ENCODE measurements at regions of chr1 and their contacts with region 1.

Region 1: GRCh38 chr1:203006948-203007871 is at the start of gene TMEM183A:
- DNase-seq: peak; percentile 97
- H3K4me3 Mint-ChIP-seq: peak within 1 kb of the TSS; percentile 80
- H3K27ac Mint-ChIP-seq: peak within 1 kb of the TSS; percentile 96
- H3K4me1 Mint-ChIP-seq: peaks cover 24% of the 10 kb centered on the region
- H3K27me3 Mint-ChIP-seq: no peaks in the 10 kb centered on the region
- total RNA-seq, gene TMEM183A: 68.1 to 76.5 TPM

Region 2: DNA sequence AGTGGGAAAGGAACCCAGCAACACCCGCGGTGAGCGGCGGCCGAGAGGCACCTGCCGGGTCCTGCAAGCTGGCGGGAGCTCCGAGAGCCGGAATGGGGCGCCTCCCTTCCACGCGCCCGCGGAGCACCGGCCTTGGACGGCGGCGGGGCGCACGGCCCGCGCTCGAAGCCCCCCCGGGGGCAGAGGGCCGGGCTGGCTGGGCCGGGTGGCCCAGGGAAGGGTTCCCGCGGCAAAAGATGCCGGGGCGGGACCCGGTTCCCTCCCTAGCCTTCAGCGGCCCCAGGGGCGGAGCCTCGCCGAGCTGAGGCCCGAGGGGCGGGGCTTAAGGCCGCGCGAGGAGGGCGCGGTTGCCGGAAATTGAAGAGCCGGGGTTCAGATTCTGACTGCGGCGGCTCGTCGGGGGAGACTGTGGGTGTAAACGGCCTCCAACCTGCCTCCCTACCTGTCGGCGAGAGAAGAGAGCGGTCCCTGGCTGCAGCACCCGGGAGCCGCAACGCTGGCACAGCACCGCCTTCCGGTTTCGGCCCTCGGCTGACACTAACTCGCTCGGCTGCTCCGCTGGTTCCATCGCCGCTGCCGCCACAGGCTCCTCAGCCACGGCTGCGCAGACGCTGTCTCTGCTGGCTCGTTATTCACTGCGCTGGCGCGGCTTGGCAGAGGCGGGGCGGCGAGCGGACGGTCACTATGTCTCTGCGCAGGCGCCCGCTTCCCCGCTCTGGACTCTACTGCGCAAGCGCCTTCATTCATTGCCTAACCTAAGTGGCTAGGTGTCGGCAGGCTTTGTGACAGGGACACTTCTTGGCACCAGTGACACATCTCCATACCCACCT is 118.5 kb before region 1 on chr1 and contains the start of gene RABIF:
- CTCF ChIA-PET with region 1: no interaction called
- POLR2A ChIA-PET with region 1: interaction called, 5 read pairs
- intact Hi-C with region 1: loop called (anchors 1 kb)
- DNase-seq: peak; percentile 98
- H3K4me3 Mint-ChIP-seq: peak within 1 kb of the TSS; percentile 93
- H3K27ac Mint-ChIP-seq: peak within 1 kb of the TSS; percentile 98
- H3K4me1 Mint-ChIP-seq: peaks cover 22% of the 10 kb centered on the region
- H3K27me3 Mint-ChIP-seq: no peaks in the 10 kb centered on the region
- total RNA-seq, gene RABIF: 9.6 to 10.1 TPM

Region 3: GRCh38 chr1:203026031-203026989 is 19.1 kb after region 1 on chr1 and contains the start of gene PPFIA4:
- CTCF ChIA-PET with region 1: interaction called, 5 read pairs
- POLR2A ChIA-PET with region 1: interaction called, 12 read pairs
- intact Hi-C with region 1: loop called (anchors 1 kb)
- DNase-seq: peak; percentile 92
- H3K4me3 Mint-ChIP-seq: peak within 1 kb of the TSS; percentile 66
- H3K27ac Mint-ChIP-seq: peak within 1 kb of the TSS; percentile 9
- H3K4me1 Mint-ChIP-seq: peaks cover 13% of the 10 kb centered on the region
- H3K27me3 Mint-ChIP-seq: peaks cover 5% of the 10 kb centered on the region
- total RNA-seq, gene PPFIA4: 16.7 to 21.4 TPM

Region 4: GRCh38 chr1:203549309-203549708 is 542.1 kb after region 1 on chr1:
- CTCF ChIA-PET with region 1: no interaction called
- POLR2A ChIA-PET with region 1: no interaction called
- intact Hi-C with region 1: no loop called
- DNase-seq: no peak
- H3K4me3 Mint-ChIP-seq: no peak overlapping the region
- H3K27ac Mint-ChIP-seq: no peak overlapping the region
- H3K4me1 Mint-ChIP-seq: no peaks in the 10 kb centered on the region
- H3K27me3 Mint-ChIP-seq: peaks cover 2% of the 10 kb centered on the region

Region 5: DNA sequence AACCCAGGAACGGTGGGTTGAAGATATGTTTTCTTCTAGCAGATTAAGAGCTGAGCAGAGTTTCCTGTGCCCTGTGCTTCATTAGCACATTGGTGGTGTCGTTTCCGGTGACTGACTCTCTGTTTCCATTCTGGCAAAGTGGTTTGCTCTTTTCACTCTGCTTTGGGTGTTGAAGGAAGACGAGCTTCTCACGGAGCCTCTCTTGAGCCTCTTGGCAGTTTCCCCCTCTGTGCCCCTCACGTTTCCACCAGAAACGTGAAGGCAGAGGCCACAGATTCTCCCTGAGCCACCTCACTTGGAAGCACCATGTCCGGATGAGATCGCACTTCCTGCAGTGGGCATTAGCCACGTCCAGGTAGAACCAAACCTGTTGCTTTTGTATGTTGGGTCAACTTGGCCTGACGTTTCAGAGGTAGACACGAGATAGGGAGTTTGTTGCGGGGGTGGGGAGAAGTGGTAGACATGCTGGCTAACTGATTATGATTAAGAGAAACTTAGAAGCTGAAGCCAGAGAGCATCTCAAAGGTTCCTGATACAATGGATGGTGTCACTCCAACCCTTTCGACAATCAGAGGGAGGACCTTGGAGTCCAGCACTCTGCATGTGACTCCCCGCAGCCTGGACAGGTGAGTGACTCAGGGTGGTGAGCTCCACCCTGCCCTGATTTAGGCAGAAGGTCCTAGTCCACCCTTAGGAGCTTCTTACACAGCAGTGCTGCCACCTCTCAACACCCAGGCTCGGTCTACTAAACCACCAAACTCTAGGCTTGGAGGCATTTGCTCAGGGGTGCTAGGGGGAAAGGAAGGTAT is 758.0 kb after region 1 on chr1 and contains the start of gene LAX1:
- CTCF ChIA-PET with region 1: no interaction called
- POLR2A ChIA-PET with region 1: no interaction called
- intact Hi-C with region 1: no loop called
- DNase-seq: peak; percentile 90
- H3K4me3 Mint-ChIP-seq: peak within 1 kb of the TSS; percentile 94
- H3K27ac Mint-ChIP-seq: peak within 1 kb of the TSS; percentile 100
- H3K4me1 Mint-ChIP-seq: peaks cover 40% of the 10 kb centered on the region
- H3K27me3 Mint-ChIP-seq: no peaks in the 10 kb centered on the region
- total RNA-seq, gene LAX1: 14.0 to 14.3 TPM

Measured in activated CD4-positive, alpha-beta memory T cell treated with anti-CD3 and anti-CD28 coated beads for 36 hours (primary cell).